ENCODE measurements at regions of chr14 and their contacts with region 1.

Region 1: GRCh38 chr14:50792051-50792477 is 38.9 kb downstream of the NIN start:
- DNase-seq: no peak
- ATAC-seq: no peak
- H3K4me3 ChIP-seq: peak overlapping the region; percentile 1 to 55 (median 40)
- H3K27ac ChIP-seq: peak overlapping the region in 11 of 12 donors; percentile 45 to 85 (median 74)
- H3K4me1 ChIP-seq: peaks cover 0 to 44% (median 8%) of the 10 kb centered on the region in 12 donors
- H3K27me3 ChIP-seq: no peaks in the 10 kb centered on the region
- CTCF ChIP-seq: no peak
- POLR2A ChIP-seq: no peak

Region 2: DNA sequence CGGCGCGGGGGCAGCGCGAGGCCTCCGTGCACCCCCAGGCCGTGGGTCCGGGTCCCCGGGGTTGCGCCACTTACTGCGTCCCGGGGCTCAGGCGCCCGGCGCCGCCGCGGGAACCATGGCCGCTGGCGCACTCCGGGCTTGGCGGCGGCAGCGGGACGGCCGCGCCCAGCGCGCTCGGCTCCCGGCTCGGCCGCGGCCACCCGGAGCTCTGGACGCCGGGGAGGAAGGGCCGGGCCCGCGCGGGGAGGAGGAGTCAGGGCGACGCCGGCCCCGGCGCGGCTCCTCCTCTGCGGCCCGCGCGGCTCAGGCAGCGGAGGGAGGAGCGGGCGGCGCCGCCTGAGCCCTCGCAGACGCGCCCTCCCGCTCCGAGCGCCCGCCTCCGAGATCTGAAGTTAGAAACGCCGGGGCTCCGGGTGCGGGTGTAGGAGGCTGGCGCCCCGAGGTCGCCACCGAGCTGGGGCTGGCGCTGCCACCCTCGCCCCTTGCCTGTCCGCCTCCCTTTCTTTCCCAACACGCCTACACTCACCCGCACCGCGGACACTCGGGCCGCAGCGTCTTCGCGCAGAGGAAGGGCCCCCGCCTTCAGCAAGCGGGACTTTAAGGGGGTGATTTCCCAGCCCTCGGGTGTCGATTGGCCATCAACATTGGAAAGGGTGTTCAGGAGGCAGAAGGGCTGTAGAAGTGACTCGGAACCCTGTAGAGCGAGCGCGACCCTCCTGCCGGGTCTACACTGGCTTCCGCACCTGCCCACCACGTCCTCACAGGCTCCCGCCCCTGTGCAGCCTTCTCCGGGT is 39.1 kb after region 1 on chr14 and contains the start of gene NIN:
- intact Hi-C with region 1: loop called in 2 of 10 experiments (anchors 5 kb)
- DNase-seq: peak; percentile 80 to 91 (median 85)
- ATAC-seq: peak; percentile 92 to 99 (median 96)
- H3K4me3 ChIP-seq: peak within 1 kb of the TSS; percentile 59 to 99 (median 90)
- H3K27ac ChIP-seq: peak within 1 kb of the TSS; percentile 86 to 97 (median 94)
- H3K4me1 ChIP-seq: peaks cover 0 to 50% (median 17%) of the 10 kb centered on the region in 12 donors
- H3K27me3 ChIP-seq: no peaks in the 10 kb centered on the region
- CTCF ChIP-seq: peak in 1 of 12 donors; percentile 5
- POLR2A ChIP-seq: no peak
- total RNA-seq, gene NIN: 17.9 to 48.3 (median 25.8) TPM